ACHN (cell line): ENCODE measurements at regions of chr12 and their contacts with region 1.

Region 1: DNA sequence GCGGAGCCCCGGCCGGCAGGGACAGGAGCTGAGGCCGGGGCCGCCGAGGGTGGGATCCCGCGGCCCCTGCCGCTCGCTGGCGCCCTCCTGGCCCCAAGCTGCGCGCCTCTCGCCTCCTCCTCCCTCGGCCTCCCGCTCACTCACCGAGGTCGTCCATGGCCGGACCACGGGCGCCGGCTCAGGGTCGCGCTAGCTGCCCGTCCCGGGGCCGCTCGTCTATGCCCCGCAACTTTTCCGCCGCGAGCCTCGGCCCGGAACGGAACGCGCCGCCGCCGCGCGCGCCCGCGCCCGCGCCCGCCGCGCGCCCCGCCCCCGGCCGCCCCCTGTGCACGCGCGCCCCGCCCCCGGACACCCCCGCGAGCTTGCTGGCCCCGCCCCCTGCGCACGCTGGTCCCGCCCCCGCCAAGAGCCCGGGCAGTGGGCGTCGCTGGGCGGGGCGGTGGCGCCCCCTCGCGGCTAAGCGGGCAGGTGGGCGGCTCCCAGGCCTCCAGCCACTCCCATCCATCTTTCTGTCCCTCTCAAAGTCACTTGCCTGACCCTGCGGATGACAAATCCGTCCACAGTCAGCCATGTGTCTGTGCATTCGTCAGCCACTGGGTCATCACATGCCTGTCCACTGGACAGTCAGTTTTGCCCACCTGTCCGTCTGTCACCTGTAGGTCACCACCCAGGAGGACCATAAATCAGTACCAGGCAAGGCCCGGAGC is at the start of gene PXN:
- DNase-seq: peak; percentile 85

Region 2: DNA sequence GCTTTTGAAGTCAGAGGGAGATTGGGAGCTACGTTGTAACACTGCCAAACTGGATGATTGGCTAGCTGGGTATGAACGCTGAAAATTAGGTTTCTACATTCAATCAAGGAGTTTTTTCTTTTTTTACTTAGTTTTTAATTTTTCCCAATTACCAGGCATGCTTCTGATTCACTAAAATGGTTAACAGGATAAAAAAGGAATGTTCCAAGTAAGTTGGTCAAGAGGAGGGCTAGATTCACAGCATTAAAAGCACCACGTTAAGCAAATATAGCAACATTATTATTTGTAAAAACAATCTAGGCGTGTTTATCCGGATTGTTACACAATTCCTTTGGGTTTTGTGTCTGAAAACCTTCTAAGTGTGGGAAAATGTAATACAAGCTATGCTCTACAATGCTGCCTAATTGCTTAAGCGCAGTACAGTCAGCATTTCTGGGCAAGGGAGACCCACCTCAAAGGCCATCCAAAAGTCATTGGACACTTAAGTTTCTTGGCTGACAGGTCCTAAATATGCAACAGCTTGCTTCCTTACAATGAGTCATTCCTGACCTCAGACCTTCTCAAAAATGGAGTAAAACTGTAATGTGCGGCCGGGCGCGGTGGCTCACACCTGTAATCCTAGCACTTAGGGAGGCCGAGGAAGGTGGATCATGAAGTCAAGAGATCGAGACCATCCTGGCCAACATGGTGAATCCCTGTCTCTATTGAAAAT is 65.9 kb before region 1 on chr12:
- in situ Hi-C with region 1: loop called (anchors 10 kb)
- DNase-seq: peak; percentile 65

Region 3: GRCh38 chr12:120228291-120229070 is 37.1 kb before region 1 on chr12:
- in situ Hi-C with region 1: loop called (anchors 5 kb)
- DNase-seq: peak; percentile 91

Region 4: GRCh38 chr12:120774169-120774916 is 508.7 kb after region 1 on chr12:
- in situ Hi-C with region 1: no loop called
- DNase-seq: no peak